Adrenal gland (tissue), 19 donors: ENCODE measurements at regions of chr12 and their contacts with region 1.

Region 1: DNA sequence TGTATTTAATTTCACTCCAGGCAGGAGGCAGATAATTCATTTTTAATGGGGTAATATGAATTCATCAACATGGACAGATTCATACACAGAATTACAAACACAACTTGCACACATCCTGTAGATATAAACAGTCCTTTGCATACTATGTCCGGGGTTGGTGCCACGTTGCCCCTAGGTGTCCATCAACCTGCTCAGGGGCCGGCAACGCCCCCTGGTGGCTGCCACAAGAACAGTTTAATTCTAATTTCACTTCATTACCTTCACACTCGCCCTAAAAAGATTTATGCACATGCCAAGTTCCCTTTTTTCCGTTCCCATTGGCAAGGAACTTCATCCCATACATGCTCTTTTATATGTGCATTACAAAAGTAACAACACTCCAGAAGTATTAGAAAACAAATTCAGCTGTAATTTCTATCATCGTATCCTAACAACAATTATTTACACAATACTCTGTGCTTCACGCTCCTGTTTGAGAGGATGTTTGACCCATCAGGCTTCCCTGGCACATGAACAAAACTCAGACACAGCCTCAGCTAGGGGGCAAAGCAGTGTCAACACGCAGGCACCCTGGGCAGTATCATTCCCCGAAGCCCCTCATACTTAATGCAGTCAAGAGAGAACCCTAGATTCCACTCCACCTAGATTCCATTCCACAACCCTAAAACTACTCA is 15.5 kb downstream of the MANSC1 start:
- DNase-seq: peak; percentile 34 to 70 (median 45)
- H3K4me3 ChIP-seq: no peak overlapping the region
- H3K27ac ChIP-seq: no peak overlapping the region
- H3K4me1 ChIP-seq: peaks cover 0 to 12% of the 10 kb centered on the region in 2 donors
- H3K27me3 ChIP-seq: no peaks in the 10 kb centered on the region
- CTCF ChIP-seq: peak; percentile 60 to 89 (median 74)
- POLR2A ChIP-seq: no peak

Region 2: GRCh38 chr12:12070674-12071656 is 263.5 kb before region 1 on chr12 and contains the start of gene BCL2L14:
- intact Hi-C with region 1: loop called in 1 of 2 experiments (anchors 10 kb)
- DNase-seq: no peak
- H3K4me3 ChIP-seq: no peak within 1 kb of the TSS
- H3K27ac ChIP-seq: no peak within 1 kb of the TSS
- H3K4me1 ChIP-seq: no peaks in the 10 kb centered on the region
- H3K27me3 ChIP-seq: no peaks in the 10 kb centered on the region
- CTCF ChIP-seq: no peak
- POLR2A ChIP-seq: no peak
- total RNA-seq, gene BCL2L14: not detected

Region 3: DNA sequence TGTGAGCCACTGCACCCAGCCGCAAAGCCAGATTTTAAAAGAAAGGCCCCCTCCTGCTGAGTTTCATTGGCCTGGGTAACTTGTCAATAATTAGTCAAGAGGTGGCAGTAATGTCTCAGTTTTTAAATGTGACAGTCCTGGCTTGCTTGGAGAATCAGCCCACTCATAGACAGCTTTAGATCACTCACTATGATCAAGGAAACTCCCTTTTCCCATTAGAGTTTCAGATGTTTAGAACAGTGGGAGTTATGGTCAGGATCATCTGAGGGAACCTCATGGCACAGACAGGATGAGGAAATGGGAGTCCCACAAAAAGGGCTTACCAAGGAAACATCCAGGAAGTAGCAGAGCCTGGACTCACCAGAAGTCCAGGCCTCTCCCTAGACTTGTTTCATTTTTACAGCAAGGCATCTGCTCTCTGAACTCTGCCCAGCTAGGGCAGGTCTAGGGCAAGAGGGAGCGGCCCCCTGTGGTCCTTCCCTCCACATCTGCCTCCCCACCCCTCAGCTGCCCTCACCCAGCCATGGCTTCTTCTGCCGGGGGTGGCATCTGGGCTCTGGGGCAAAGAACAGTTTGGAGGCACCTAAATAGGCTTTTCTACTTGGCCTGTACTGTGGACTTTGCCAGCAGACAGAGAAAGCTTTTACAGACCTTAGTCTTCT is 252.5 kb before region 1 on chr12:
- intact Hi-C with region 1: loop called (anchors 5 to 10 kb)
- DNase-seq: no peak
- H3K4me3 ChIP-seq: no peak overlapping the region
- H3K27ac ChIP-seq: peak overlapping the region in 1 of 5 donors; percentile 24
- H3K4me1 ChIP-seq: no peaks in the 10 kb centered on the region
- H3K27me3 ChIP-seq: no peaks in the 10 kb centered on the region
- CTCF ChIP-seq: peak in 5 of 6 experiments; percentile 29 to 47 (median 33)
- POLR2A ChIP-seq: no peak